ENCODE measurements at regions of chr17 and their contacts with region 1.

Region 1: GRCh38 chr17:15260376-15261257 is 4.5 kb downstream of the PMP22 start:
- DNase-seq: peak; percentile 85 to 93 (median 92)
- ATAC-seq: peak; percentile 80
- H3K4me3 ChIP-seq: peak overlapping the region; percentile 44 to 47
- H3K27ac ChIP-seq: peak overlapping the region; percentile 69 to 93
- H3K4me1 ChIP-seq: peaks cover 4 to 70% of the 10 kb centered on the region in 2 donors
- H3K27me3 ChIP-seq: peaks cover 0 to 70% of the 10 kb centered on the region in 2 donors
- CTCF ChIP-seq: peak; percentile 81 to 89

Region 2: DNA sequence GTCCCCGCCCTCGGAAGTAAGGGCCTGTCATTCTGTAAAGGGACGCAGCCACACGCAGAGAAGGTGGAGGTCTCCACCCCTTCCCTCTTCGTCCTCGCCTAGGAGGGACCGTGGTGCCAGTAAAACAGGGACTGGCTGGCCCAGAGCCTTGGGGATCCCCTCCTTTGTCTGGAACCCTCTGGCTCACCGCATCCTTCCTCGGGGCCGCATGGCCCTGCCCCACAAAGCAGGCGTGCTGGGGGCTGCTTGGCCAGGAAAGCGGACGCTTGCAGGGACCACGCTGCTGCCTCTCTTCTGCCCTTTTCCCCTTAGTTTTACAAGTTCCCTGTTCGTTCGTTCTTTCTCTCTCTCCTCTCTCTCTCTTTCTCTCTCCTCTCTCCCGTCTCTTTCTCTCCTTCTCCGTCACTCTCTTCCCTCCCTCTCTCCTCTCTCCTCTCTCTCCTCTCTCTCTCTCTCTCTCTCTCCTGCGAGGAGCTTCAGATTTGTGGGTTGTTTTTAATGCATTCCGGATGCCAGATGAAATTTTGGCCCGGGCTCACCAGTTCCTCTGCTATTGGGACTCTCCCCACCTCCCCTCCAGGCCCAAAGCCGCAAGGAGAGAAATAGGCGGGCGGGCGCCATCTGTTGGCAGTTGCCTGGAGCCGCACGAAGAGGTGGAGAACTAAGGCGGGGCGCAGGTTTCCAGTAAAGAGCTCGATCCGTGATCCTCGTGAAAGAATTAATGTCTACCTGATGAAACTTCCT is 241.9 kb after region 1 on chr17:
- intact Hi-C with region 1: loop called in 1 of 2 experiments (anchors 5 kb)
- DNase-seq: peak; percentile 87 to 95 (median 91)
- ATAC-seq: peak; percentile 98
- H3K4me3 ChIP-seq: peak overlapping the region in 1 of 2 donors; percentile 7
- H3K27ac ChIP-seq: peak overlapping the region; percentile 19 to 72
- H3K4me1 ChIP-seq: peaks cover 0 to 11% of the 10 kb centered on the region in 2 donors
- H3K27me3 ChIP-seq: no peaks in the 10 kb centered on the region
- CTCF ChIP-seq: peak; percentile 67 to 78

Measured in left lung (tissue), 14 donors.